Spleen (tissue), 13 donors: ENCODE measurements at regions of chr3 and their contacts with region 1.

Region 1: DNA sequence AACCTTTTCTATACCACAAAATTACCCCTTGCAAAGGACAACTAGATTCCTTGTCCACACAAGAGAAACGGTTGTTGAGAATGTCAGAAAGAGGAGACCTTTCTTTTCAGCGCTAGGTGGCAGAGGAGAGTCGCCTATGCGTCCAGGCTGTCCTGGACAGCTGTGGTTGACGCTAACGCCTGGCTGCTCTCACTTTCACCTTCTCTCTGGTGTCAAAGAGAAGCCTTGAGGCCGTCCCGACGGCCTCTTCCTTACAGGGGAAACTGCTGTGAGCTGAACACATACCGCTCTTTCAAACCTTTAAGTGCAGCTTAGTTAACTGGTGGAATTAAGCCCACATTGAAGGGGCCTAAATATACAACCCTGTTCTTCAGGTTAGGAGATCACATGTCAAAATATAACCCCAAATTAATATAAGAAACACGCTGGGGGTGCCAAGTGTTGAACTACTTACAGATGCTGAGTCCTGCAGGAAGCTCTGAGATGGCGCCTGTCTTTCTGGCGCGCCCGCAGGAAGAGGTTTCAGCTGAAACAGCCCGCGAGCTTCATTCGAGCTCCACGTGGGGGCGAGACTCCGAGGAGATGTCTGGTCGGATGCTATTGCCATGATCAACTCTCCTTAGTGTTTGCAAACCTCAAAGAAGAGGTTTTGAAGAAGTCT is 26.1 kb upstream of the KBTBD8 start:
- DNase-seq: peak; percentile 89
- H3K4me3 ChIP-seq: peak overlapping the region; percentile 16 to 64 (median 30)
- H3K27ac ChIP-seq: peak overlapping the region in 7 of 8 donors; percentile 4 to 76 (median 68)
- H3K4me1 ChIP-seq: peaks cover 7 to 22% (median 13%) of the 10 kb centered on the region in 6 donors
- H3K27me3 ChIP-seq: no peaks in the 10 kb centered on the region
- CTCF ChIP-seq: peak; percentile 46 to 86 (median 74)
- POLR2A ChIP-seq: no peak

Region 2: DNA sequence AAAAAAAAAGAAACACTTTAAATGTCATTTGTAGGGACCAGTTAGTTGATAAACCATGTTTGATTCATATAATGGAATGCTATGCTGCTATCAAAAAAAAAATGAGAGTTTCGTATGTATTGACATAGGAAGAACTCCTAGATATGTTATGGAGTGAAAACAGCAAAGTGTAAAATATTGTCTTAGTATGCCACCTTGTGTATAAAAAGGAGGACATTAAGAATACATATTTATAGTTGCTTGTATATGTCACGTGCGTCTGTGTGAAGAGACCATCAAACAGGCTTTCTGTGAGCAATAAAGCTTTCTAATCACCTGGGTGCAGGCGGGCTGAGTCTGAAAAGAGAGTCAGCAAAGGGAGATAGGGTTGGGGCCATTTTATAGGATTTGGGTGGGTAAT is 65.6 kb after region 1 on chr3:
- intact Hi-C with region 1: loop called (anchors 5 kb)
- DNase-seq: no peak
- H3K4me3 ChIP-seq: no peak overlapping the region
- H3K27ac ChIP-seq: no peak overlapping the region
- H3K4me1 ChIP-seq: no peaks in the 10 kb centered on the region
- H3K27me3 ChIP-seq: no peaks in the 10 kb centered on the region
- CTCF ChIP-seq: peak in 3 of 11 experiments; percentile 14 to 45 (median 22)
- POLR2A ChIP-seq: no peak

Region 3: DNA sequence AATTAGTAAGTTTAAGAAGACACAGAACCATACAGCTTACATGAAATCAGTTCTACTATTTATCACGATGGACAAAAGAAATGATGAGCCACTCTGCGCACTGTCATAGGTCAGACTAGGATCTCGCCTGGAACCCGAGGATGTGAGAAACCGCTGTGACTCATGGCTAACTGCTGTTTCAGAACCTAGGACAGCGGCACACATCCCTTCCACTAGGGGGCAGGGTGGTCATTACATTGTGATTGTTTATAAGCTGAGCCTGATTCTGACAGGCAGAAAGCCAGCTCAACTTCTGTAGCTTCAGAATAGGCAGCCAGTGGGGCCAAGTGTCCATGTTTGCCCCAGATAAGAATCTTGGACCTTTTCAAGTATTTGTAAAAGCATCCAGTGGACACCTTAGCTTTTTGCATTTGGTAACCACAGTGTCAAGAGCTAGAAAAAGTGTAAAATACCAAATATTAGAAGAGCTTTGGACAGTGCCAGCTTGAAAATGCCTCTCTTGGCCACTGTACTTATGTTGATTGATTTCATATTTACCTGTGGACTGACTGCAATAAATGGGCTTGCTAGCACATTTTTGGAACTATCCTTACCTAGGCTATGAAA is 141.9 kb after region 1 on chr3:
- intact Hi-C with region 1: loop called (anchors 10 kb)
- DNase-seq: peak; percentile 81
- H3K4me3 ChIP-seq: no peak overlapping the region
- H3K27ac ChIP-seq: no peak overlapping the region
- H3K4me1 ChIP-seq: no peaks in the 10 kb centered on the region
- H3K27me3 ChIP-seq: peaks cover 0 to 10% (median 0%) of the 10 kb centered on the region in 7 donors
- CTCF ChIP-seq: peak; percentile 54 to 90 (median 77)
- POLR2A ChIP-seq: no peak